ENCODE measurements at regions of chrX and their contacts with region 1.

Region 1: DNA sequence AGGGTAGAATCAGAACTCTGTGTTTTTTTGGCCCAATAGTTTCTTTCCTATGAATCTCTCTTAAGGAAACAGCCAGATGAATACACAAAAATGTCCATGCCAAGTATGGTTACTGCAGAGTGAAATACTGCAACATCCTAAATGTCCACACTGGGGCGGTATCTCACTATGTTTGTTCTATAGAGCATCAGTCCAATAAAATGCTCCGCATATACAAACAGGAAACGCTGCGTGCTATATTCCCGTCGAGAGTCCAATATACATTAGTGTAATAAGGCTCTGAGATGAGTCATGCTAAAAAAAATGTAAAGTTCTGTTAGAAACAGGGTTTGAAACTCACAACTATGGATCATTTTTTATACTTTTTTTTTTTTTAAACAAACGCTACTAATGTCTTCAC is 72.9 kb upstream of the ENOX2 start:
- DNase-seq: peak; percentile 35
- H3K4me3 Mint-ChIP-seq: no peak overlapping the region
- H3K27ac Mint-ChIP-seq: no peak overlapping the region
- H3K4me1 Mint-ChIP-seq: no peaks in the 10 kb centered on the region
- H3K27me3 Mint-ChIP-seq: peaks cover 47% of the 10 kb centered on the region
- CTCF ChIP-seq: no peak

Region 2: GRCh38 chrX:131366407-131366806 is 390.5 kb after region 1 on chrX:
- CTCF ChIA-PET with region 1: no interaction called
- intact Hi-C with region 1: loop called (anchors 10 kb)
- DNase-seq: no peak
- H3K4me3 Mint-ChIP-seq: no peak overlapping the region
- H3K27ac Mint-ChIP-seq: no peak overlapping the region
- H3K4me1 Mint-ChIP-seq: no peaks in the 10 kb centered on the region
- H3K27me3 Mint-ChIP-seq: no peaks in the 10 kb centered on the region
- CTCF ChIP-seq: no peak

Region 3: DNA sequence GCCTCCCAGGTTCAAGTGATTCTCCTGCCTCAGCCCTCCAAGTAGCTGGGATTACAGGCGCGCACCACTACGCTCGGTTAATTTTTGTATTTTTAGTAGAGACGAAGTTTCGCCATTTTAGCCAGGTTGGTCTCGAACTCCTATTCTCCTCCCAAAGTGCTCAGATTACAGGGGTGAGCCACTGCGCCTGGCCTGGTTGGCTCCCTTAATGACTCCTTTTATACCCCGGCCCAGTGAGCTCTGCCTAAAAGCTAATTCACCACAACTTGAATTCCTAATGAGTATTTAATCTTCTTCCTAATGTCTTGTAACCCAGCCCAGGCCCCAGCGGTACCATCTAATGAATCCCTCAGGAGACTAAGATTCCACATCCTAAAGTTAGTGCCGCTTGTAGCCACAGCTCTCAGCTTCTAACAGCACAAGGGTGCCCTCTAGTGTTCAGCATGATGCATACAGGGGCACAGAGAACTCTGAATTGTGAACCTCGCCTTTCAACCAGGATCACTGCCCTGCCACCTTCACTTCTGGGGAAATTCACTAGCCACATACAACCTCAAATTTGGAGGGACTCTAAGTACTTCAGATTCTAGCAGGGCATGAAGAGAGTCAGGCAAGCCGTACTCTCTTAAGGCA is 657.5 kb after region 1 on chrX:
- CTCF ChIA-PET with region 1: no interaction called
- intact Hi-C with region 1: loop called (anchors 1 kb)
- DNase-seq: peak; percentile 55
- H3K4me3 Mint-ChIP-seq: no peak overlapping the region
- H3K27ac Mint-ChIP-seq: no peak overlapping the region
- H3K4me1 Mint-ChIP-seq: no peaks in the 10 kb centered on the region
- H3K27me3 Mint-ChIP-seq: no peaks in the 10 kb centered on the region
- CTCF ChIP-seq: peak; percentile 45

Region 4: GRCh38 chrX:131677655-131678628 is 702.0 kb after region 1 on chrX:
- CTCF ChIA-PET with region 1: no interaction called
- intact Hi-C with region 1: loop called (anchors 1 kb)
- DNase-seq: peak; percentile 50
- H3K4me3 Mint-ChIP-seq: no peak overlapping the region
- H3K27ac Mint-ChIP-seq: no peak overlapping the region
- H3K4me1 Mint-ChIP-seq: no peaks in the 10 kb centered on the region
- H3K27me3 Mint-ChIP-seq: peaks cover 10% of the 10 kb centered on the region
- CTCF ChIP-seq: peak; percentile 71